Adrenal gland (tissue), 19 donors: ENCODE measurements at regions of chr11 and their contacts with region 1.

Region 1: GRCh38 chr11:59283825-59284772 is 71.4 kb upstream of the MPEG1 start:
- DNase-seq: peak in 6 of 7 donors; percentile 20 to 77 (median 48)
- H3K4me3 ChIP-seq: no peak overlapping the region
- H3K27ac ChIP-seq: no peak overlapping the region
- H3K4me1 ChIP-seq: no peaks in the 10 kb centered on the region
- H3K27me3 ChIP-seq: no peaks in the 10 kb centered on the region
- CTCF ChIP-seq: peak; percentile 58 to 80 (median 74)
- POLR2A ChIP-seq: no peak

Region 2: GRCh38 chr11:59186130-59186594 is 97.9 kb before region 1 on chr11:
- intact Hi-C with region 1: loop called in 1 of 2 experiments (anchors 10 kb)
- DNase-seq: peak in 1 of 7 donors; percentile 29
- H3K4me3 ChIP-seq: no peak overlapping the region
- H3K27ac ChIP-seq: peak overlapping the region in 1 of 5 donors; percentile 61
- H3K4me1 ChIP-seq: peaks cover 0 to 27% of the 10 kb centered on the region in 2 donors
- H3K27me3 ChIP-seq: no peaks in the 10 kb centered on the region
- CTCF ChIP-seq: peak; percentile 8 to 49 (median 32)
- POLR2A ChIP-seq: no peak